ENCODE measurements at regions of chr20 and their contacts with region 1.

Region 1: GRCh38 chr20:20837574-20838021 is 125.2 kb upstream of the RALGAPA2 start:
- DNase-seq: peak in 1 of 2 experiments; percentile 78
- H3K4me3 ChIP-seq: no peak overlapping the region
- H3K27ac ChIP-seq: no peak overlapping the region
- H3K4me1 ChIP-seq: no peaks in the 10 kb centered on the region
- H3K27me3 ChIP-seq: no peaks in the 10 kb centered on the region; a peak in 1 of 7 replicates
- CTCF ChIP-seq: peak; percentile 53 to 77 (median 72)
- EP300 ChIP-seq: no peak
- POLR2A ChIP-seq: no peak
- RAD21 ChIP-seq: peak; percentile 83 to 85

Region 2: GRCh38 chr20:20849161-20849560 is 11.6 kb after region 1 on chr20:
- CTCF ChIA-PET with region 1: interaction called, 28 read pairs
- POLR2A ChIA-PET with region 1: no interaction called
- DNase-seq: no peak
- H3K4me3 ChIP-seq: no peak overlapping the region
- H3K27ac ChIP-seq: no peak overlapping the region
- H3K4me1 ChIP-seq: no peaks in the 10 kb centered on the region
- H3K27me3 ChIP-seq: peaks cover 0 to 2% (median 0%) of the 10 kb centered on the region in 4 experiments; a peak in 1 of 7 replicates
- CTCF ChIP-seq: no peak
- EP300 ChIP-seq: no peak
- POLR2A ChIP-seq: no peak
- RAD21 ChIP-seq: no peak

Region 3: GRCh38 chr20:20887593-20888265 is 50.1 kb after region 1 on chr20:
- CTCF ChIA-PET with region 1: no interaction called
- POLR2A ChIA-PET with region 1: no interaction called
- DNase-seq: peak in 1 of 2 experiments; percentile 72
- H3K4me3 ChIP-seq: no peak overlapping the region
- H3K27ac ChIP-seq: no peak overlapping the region
- H3K4me1 ChIP-seq: peaks cover 4 to 16% (median 12%) of the 10 kb centered on the region in 4 experiments
- H3K27me3 ChIP-seq: no peaks in the 10 kb centered on the region
- CTCF ChIP-seq: no peak
- EP300 ChIP-seq: no peak
- POLR2A ChIP-seq: no peak
- RAD21 ChIP-seq: no peak

Region 4: GRCh38 chr20:21520702-21521595 is 683.4 kb after region 1 on chr20:
- CTCF ChIA-PET with region 1: interaction called, 12 read pairs
- POLR2A ChIA-PET with region 1: interaction called, 3 read pairs
- DNase-seq: no peak
- H3K4me3 ChIP-seq: peak overlapping the region; percentile 32 to 59 (median 34); a peak in 7 of 8 replicates
- H3K27ac ChIP-seq: no peak overlapping the region
- H3K4me1 ChIP-seq: peaks cover 19 to 53% (median 31%) of the 10 kb centered on the region in 4 experiments
- H3K27me3 ChIP-seq: peaks cover 94 to 100% (median 100%) of the 10 kb centered on the region in 4 experiments
- CTCF ChIP-seq: peak; percentile 59 to 75 (median 72)
- EP300 ChIP-seq: no peak
- POLR2A ChIP-seq: no peak
- RAD21 ChIP-seq: peak; percentile 77 to 85

Measured in H1 (cell line).